ENCODE measurements at regions of chr1 and their contacts with region 1.

Region 1: DNA sequence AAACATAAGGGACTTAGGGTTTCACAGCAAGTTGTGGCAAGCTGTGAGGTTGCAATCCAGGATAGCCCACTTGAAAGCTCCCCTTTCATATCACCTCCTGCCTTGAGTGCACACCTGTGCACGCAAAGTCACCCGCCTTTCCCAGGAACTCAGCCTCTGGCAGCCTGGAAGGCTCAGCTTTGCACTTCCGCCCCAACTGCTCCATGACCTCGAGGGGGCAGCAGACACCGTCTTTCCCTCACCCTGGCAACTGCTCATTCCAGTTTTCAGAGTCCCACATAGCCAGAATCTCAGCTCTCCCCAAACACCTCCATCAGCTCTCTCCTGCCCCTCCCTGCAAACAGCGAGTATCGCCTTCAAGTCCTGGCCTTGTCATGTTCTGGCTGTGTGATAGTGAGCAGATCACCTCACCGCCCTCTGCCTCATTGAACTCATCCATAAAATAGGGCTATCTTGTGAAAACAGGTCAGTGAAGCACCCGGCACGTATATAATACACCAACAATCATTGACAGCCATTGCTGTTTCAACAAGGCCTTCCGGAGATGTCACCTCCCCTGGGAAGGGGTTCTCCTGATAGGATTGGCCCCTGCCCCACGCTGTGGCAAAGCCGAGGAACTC is 32.2 kb upstream of the EPB41 start:
- DNase-seq: peak; percentile 81
- CTCF ChIP-seq: peak; percentile 95

Region 2: GRCh38 chr1:29033829-29034466 is 151.8 kb after region 1 on chr1:
- in situ Hi-C with region 1: loop called (anchors 5 kb)
- DNase-seq: peak; percentile 65
- CTCF ChIP-seq: peak; percentile 45

Region 3: DNA sequence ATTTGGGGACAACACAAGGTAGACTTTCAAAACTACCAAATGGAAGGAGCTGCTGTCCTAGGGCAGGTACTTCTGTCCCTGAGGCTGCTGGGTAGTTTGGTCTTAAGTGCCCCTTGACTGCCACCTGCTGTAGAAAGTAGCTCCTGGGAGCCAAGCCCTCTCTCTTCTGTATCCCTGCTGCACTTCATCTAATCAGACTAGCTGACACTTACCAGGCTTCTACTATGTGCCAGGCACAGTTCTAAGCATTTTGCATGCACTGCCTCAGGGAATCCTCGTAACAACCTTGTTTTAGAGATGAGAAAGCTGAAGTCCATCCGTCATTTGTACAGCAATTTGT is 315.4 kb after region 1 on chr1:
- in situ Hi-C with region 1: loop called (anchors 5 kb)
- DNase-seq: peak; percentile 49
- CTCF ChIP-seq: no peak

Region 4: DNA sequence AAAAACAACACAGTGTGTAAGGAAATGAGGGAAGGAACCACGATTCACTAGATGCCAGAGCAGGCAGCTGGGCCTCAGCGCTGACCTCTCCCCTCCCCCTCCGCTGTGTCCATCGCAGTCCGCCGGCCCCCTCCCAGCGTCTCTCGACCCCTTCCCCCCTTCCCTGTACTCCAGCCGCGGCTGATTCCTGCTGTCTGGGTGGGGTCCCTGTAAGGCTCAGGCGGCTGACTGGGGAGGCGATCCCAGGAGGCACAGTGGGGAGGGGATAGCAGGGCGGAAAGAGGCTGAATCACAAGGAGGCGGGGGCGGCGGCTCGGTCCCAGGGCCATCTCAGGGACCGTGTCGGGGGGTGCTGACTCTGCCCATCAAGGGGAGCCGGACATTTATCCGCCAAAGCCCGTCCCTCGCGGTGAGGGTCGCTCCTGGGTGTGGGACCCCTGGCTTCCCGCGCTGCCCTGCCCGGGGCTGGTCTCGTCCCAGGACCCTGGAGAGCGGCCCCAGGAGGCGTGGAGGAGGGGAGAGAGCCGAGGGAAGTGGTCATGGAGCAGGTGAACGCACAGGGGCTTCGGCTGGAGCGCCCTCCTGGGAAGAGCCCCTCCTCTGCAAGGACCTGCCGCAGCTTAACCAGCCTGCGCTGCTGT is 596.2 kb after region 1 on chr1:
- in situ Hi-C with region 1: no loop called
- DNase-seq: no peak
- CTCF ChIP-seq: no peak

Measured in GM13976 (cell line).